ENCODE measurements at regions of chr5 and their contacts with region 1.

Region 1: GRCh38 chr5:91383027-91383955 is at the start of gene ARRDC3:
- DNase-seq: peak; percentile 99
- ATAC-seq: peak; percentile 82
- total RNA-seq, gene ARRDC3: 19.9 TPM

Region 2: GRCh38 chr5:90932052-90932699 is 451.1 kb before region 1 on chr5:
- intact Hi-C with region 1: loop called (anchors 1 kb)
- DNase-seq: no peak
- ATAC-seq: peak; percentile 56

Region 3: GRCh38 chr5:91225848-91226686 is 157.2 kb before region 1 on chr5:
- intact Hi-C with region 1: loop called (anchors 2 kb)
- DNase-seq: no peak
- ATAC-seq: peak; percentile 46

Region 4: DNA sequence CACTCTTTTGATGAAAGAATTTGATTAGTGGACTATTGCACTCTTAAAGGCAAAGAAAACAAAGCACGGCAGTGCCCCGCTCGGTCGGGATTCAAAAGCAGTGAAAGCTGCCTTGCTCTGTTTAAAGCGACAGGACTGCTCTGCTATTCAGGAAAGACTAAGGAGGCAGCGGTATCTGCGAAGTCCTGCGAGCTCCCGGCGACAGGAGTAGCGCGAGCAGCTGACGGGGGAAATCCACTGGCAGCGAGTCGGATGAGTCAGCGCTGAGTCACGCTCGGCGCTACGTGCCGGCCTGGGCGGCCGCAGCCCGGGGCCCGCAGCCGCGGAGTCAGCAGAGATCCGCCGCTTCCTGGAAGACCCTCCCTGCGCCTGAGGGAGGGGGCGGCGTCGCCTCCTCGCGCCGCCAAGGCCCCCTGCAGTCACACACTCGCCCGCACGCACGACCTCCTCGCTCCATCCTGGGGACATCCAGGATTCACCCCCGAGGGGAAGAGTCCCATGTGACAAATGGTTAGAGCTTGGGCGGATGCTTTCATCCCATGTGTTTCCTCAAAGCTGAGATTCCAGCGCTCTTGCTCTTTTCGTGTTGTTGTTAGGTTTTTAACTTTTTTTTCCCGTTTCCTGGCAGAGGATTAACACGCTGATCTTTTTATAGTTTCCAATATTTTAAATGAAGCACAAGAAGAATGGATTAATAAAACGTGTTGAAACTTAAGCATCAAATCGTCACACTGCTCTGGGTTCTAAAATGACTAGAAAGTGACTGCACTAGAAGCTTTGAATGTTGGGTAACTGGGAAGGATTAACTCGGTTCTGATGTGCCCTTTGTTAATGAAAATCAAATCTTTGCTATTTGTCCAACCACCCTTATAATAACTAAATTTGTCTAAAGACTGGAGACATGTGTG is 102.7 kb before region 1 on chr5:
- intact Hi-C with region 1: loop called (anchors 1 kb)
- DNase-seq: peak; percentile 96
- ATAC-seq: peak; percentile 97

Region 5: GRCh38 chr5:91311697-91312501 is 71.4 kb before region 1 on chr5:
- intact Hi-C with region 1: loop called (anchors 1 kb)
- DNase-seq: peak; percentile 78
- ATAC-seq: peak; percentile 80

Region 6: GRCh38 chr5:91367374-91367773 is 15.9 kb before region 1 on chr5:
- intact Hi-C with region 1: no loop called
- DNase-seq: no peak
- ATAC-seq: no peak

Region 7: DNA sequence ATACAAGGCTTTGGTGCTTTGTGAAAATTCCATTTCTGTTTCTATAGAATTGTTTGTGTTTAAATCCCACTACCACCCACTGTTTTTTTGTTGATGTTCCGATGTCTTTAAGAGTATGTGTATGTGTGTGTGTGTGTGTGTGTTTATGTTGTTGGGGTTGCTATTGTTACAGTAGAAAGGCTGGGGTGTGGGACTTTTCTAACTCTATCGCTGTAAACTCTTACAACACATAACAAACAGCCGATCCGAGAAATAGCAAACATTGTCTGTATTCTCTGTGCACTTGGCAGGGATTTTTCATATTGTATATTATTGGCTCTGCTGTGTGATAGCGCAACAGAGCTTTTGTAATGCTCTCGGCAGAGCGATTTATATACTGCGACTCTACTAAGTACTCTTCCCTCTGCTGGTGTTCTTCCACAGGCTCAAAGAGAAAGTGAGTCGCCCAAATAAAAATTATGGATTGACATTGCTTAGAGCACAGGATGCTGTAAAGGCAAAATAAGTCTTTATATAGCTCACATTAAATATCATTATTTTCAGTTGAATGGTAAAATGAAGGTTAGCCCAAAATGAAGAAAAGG is 492.0 kb after region 1 on chr5:
- intact Hi-C with region 1: no loop called
- DNase-seq: no peak
- ATAC-seq: no peak

Measured in Right ventricle myocardium inferior (tissue), 1 donor.